ENCODE measurements at regions of chr14 and their contacts with region 1.

Region 1: DNA sequence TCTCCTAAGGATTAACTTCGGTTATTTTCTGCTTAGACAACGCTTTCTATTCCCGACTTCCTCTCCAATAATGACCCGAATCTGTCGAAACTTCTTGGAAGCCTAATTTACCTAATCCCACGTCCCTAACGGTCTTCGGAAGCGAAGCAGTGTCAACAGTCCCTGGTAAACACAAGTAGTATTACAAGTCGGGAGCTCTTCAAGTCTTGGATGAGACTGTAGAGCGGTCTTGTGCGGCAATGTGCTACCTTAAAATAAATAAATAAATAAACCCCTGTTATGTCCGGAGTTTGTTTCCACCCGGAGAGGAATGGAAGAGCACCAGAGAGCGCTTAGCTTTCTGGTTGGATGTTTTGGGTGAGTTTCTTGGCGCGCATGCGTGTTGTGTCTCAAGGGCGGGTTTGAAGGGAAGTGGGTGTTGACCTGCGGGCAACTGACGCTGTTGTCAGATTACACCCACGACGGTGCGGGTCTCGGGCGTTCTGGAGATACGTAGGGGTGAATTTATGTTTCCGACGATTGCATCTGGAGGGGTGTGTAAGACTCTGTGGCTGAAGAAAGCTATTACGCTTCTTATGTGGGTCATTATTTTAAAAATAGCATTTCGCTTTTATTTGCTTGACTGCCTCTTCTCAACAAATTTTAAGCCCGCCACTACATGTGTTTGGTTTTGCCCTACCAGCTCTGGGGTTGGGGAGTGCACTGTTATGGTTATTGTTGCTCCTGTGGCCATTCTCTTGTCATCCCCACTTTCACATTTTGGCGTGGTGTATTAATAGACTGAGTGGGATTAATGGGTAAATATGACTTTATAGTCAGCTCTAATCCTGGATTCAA is at the starts of genes KIAA0586 and TIMM9:
- DNase-seq: peak; percentile 95
- H3K4me3 Mint-ChIP-seq: peak within 1 kb of the TSS; percentile 86
- H3K27ac Mint-ChIP-seq: peak within 1 kb of the TSS; percentile 96
- H3K4me1 Mint-ChIP-seq: peaks cover 49% of the 10 kb centered on the region
- H3K27me3 Mint-ChIP-seq: no peaks in the 10 kb centered on the region
- total RNA-seq, gene KIAA0586: 19.7 and 19.8 TPM in 2 replicates
- total RNA-seq, gene TIMM9: 66.5 and 67.4 TPM in 2 replicates

Region 2: GRCh38 chr14:58199726-58200479 is 227.6 kb before region 1 on chr14 and contains the start of gene ACTR10:
- intact Hi-C with region 1: loop called (anchors 1 kb)
- DNase-seq: peak; percentile 80
- H3K4me3 Mint-ChIP-seq: peak within 1 kb of the TSS; percentile 93
- H3K27ac Mint-ChIP-seq: peak within 1 kb of the TSS; percentile 86
- H3K4me1 Mint-ChIP-seq: peaks cover 24% of the 10 kb centered on the region
- H3K27me3 Mint-ChIP-seq: peaks cover 1% of the 10 kb centered on the region
- total RNA-seq, gene ACTR10: 38.3 and 40.3 TPM in 2 replicates

Region 3: GRCh38 chr14:58331111-58331510 is 96.4 kb before region 1 on chr14:
- intact Hi-C with region 1: loop called (anchors 1 kb)
- DNase-seq: peak; percentile 84
- H3K4me3 Mint-ChIP-seq: peak overlapping the region; percentile 64
- H3K27ac Mint-ChIP-seq: peak overlapping the region; percentile 91
- H3K4me1 Mint-ChIP-seq: peaks cover 19% of the 10 kb centered on the region
- H3K27me3 Mint-ChIP-seq: no peaks in the 10 kb centered on the region

Region 4: DNA sequence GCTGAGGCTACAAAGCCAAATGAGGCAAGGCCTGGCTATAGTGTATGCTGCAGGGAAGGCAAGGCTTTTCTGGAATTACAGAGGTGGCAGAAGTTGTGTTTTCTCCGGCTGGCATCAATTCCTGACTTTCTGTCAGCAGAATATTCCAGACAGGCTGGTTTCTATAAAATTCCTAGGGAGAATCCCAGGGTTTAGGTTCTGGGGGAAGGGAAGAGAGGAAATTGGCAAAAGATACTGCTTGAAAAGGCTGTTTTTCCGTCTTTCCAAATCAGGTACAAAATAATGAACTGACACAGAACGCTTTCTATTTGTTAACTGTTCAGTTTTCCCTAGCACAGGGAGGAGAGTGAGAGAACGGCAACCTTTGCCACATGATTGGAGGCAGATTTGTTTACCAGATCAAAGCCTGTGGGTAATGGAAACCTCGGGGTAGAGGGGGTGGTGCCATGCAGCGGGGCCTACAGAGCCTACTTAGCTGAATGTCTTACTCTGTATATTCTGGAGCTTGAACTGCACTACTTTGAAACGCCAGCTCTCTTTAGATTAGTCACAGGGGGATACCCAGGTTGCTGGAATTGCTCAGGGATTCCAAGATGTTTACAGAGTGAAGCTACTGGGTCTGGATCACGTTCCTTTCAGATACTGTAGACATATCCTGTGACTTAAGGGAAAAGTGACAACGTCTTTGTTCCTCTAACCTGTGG is 144.4 kb after region 1 on chr14:
- intact Hi-C with region 1: loop called (anchors 5 kb)
- DNase-seq: no peak
- H3K4me3 Mint-ChIP-seq: peak overlapping the region; percentile 67
- H3K27ac Mint-ChIP-seq: peak overlapping the region; percentile 88
- H3K4me1 Mint-ChIP-seq: peaks cover 21% of the 10 kb centered on the region
- H3K27me3 Mint-ChIP-seq: peaks cover 2% of the 10 kb centered on the region

Region 5: DNA sequence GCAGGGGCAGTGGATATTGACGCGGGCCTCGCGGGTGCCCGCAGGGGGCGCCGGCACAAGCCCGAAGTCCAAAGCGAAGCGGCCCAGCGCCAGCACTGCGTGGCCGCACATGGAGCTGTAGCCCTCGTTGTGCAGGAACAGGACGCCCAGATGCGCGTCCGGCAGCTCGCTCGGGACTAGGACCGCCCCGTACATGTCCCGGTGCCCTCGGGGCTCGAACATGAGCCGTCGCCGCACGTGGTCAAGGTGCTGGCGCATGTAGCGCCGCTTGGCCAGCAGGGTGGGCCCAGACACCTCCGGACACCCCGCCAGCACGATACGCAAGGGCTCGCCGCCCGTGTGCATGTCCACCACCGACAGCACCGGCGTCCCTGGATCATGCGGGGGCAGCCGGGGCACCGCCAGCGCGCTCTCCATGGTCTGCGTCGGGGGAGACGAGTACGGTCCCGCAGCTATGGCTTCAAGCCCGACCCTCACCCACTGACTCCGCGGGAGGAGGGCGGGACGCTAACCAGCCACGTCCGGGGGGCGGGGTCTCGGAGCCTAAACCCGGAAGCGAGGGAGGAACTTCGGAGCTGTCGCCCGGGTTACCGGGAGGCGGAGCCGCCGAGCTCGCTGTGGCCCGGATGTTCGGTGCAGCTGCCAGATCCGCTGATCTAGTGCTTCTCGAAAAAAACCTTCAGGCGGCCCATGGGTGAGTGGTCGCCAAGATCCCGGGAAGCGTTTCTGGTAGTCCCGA is 1056.6 kb after region 1 on chr14 and contains the starts of genes JKAMP and L3HYPDH:
- intact Hi-C with region 1: loop called (anchors 1 kb)
- DNase-seq: peak; percentile 95
- H3K4me3 Mint-ChIP-seq: peak within 1 kb of the TSS; percentile 94
- H3K27ac Mint-ChIP-seq: peak within 1 kb of the TSS; percentile 90
- H3K4me1 Mint-ChIP-seq: peaks cover 61% of the 10 kb centered on the region
- H3K27me3 Mint-ChIP-seq: no peaks in the 10 kb centered on the region
- total RNA-seq, gene JKAMP: 27.6 and 28.8 TPM in 2 replicates
- total RNA-seq, gene L3HYPDH: 14.0 and 15.9 TPM in 2 replicates

Measured in activated T-helper 1 cell treated with anti-CD3 and anti-CD28 coated beads, Interleukin-12 subunit alpha, Interleukin-12 subunit beta, Interleukin-2, Interleukin-4 antibody, amounts not matched to agents 30 ng/mL and 10 ng/mL and 1 ng/mL, durations not matched to agents 14 hours and 24 hours and 36 hours (primary cell).